Transverse colon (tissue), 4 donors: ENCODE measurements at regions of chr9 and their contacts with region 1.

Region 1: GRCh38 chr9:72635197-72635596 is 113.8 kb downstream of the TMC1 start:
- DNase-seq: no peak
- H3K4me3 ChIP-seq: no peak overlapping the region
- H3K27ac ChIP-seq: no peak overlapping the region
- H3K4me1 ChIP-seq: no peaks in the 10 kb centered on the region
- H3K27me3 ChIP-seq: no peaks in the 10 kb centered on the region
- CTCF ChIP-seq: no peak
- EP300 ChIP-seq: no peak
- POLR2A ChIP-seq: no peak

Region 2: GRCh38 chr9:72464857-72465592 is 170.2 kb before region 1 on chr9:
- in situ Hi-C with region 1: no loop called
- intact Hi-C with region 1: no loop called
- DNase-seq: no peak
- H3K4me3 ChIP-seq: no peak overlapping the region
- H3K27ac ChIP-seq: peak overlapping the region in 1 of 4 donors; percentile 15
- H3K4me1 ChIP-seq: peaks cover 0 to 4% (median 0%) of the 10 kb centered on the region in 4 donors
- H3K27me3 ChIP-seq: no peaks in the 10 kb centered on the region
- CTCF ChIP-seq: no peak
- EP300 ChIP-seq: no peak
- POLR2A ChIP-seq: no peak

Region 3: GRCh38 chr9:72675586-72675985 is 40.4 kb after region 1 on chr9:
- in situ Hi-C with region 1: no loop called
- intact Hi-C with region 1: no loop called
- DNase-seq: no peak
- H3K4me3 ChIP-seq: no peak overlapping the region
- H3K27ac ChIP-seq: no peak overlapping the region
- H3K4me1 ChIP-seq: no peaks in the 10 kb centered on the region
- H3K27me3 ChIP-seq: no peaks in the 10 kb centered on the region
- CTCF ChIP-seq: no peak
- EP300 ChIP-seq: no peak
- POLR2A ChIP-seq: no peak

Region 4: DNA sequence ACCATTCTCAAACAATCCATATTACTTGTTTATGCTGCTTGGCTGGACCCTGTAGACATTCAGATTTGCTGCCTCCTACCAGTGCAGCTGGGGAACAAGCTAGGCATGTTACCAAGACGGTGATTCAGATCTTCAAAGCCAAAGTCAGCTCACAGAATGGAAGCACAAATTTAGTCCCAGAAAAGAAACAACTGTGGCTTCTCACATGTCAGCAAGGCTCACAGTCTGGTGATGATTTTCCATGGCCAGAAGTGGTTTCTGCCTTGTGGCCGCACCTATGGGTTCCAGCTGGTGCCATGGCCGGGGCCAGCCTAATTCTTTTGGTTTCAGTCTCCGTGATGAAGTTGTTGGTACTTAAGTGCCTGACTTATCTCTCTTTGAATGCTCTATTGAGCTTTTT is 68.4 kb after region 1 on chr9:
- in situ Hi-C with region 1: no loop called
- intact Hi-C with region 1: no loop called
- DNase-seq: no peak
- H3K4me3 ChIP-seq: no peak overlapping the region
- H3K27ac ChIP-seq: no peak overlapping the region
- H3K4me1 ChIP-seq: no peaks in the 10 kb centered on the region
- H3K27me3 ChIP-seq: no peaks in the 10 kb centered on the region
- CTCF ChIP-seq: no peak
- EP300 ChIP-seq: no peak
- POLR2A ChIP-seq: no peak

Region 5: DNA sequence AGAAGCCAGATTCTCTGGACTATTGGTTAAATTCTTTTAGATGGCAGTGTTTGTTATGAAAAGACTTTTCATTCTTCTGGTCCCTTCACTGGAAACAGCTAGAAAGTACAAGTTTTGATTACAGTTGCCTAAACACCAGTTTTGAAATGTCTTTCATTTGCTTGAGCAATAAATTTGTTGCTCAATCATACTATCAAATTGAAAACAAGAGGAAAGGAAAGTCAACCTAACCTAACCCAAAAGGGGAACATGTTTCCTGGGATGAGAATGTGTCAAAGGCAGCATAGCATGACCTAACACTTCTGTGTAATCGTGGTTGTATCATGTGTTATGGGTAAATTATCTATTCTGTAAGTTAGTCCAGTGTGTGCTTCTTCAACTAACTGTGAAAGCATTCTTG is 99.4 kb after region 1 on chr9:
- in situ Hi-C with region 1: loop called in 1 of 4 experiments (anchors 25 kb)
- intact Hi-C with region 1: no loop called
- DNase-seq: no peak
- H3K4me3 ChIP-seq: no peak overlapping the region
- H3K27ac ChIP-seq: no peak overlapping the region
- H3K4me1 ChIP-seq: no peaks in the 10 kb centered on the region
- H3K27me3 ChIP-seq: no peaks in the 10 kb centered on the region
- CTCF ChIP-seq: no peak
- EP300 ChIP-seq: no peak
- POLR2A ChIP-seq: no peak